Calu3 (cell line): ENCODE measurements at regions of chr2 and their contacts with region 1.

Region 1: GRCh38 chr2:158745044-158745865 is 49.9 kb upstream of the DAPL1 start:
- DNase-seq: peak; percentile 51
- H3K4me3 Mint-ChIP-seq: no peak overlapping the region
- H3K27ac Mint-ChIP-seq: no peak overlapping the region
- H3K4me1 Mint-ChIP-seq: peaks cover 15% of the 10 kb centered on the region
- H3K27me3 Mint-ChIP-seq: peaks cover 59% of the 10 kb centered on the region
- CTCF ChIP-seq: peak; percentile 53

Region 2: GRCh38 chr2:158024288-158024898 is 720.9 kb before region 1 on chr2:
- CTCF ChIA-PET with region 1: interaction called, 23 read pairs
- intact Hi-C with region 1: no loop called
- DNase-seq: peak; percentile 64
- H3K4me3 Mint-ChIP-seq: no peak overlapping the region
- H3K27ac Mint-ChIP-seq: no peak overlapping the region
- H3K4me1 Mint-ChIP-seq: no peaks in the 10 kb centered on the region
- H3K27me3 Mint-ChIP-seq: no peaks in the 10 kb centered on the region
- CTCF ChIP-seq: peak; percentile 64

Region 3: GRCh38 chr2:158113741-158114295 is 631.4 kb before region 1 on chr2:
- CTCF ChIA-PET with region 1: no interaction called
- intact Hi-C with region 1: no loop called
- DNase-seq: no peak
- H3K4me3 Mint-ChIP-seq: no peak overlapping the region
- H3K27ac Mint-ChIP-seq: no peak overlapping the region
- H3K4me1 Mint-ChIP-seq: no peaks in the 10 kb centered on the region
- H3K27me3 Mint-ChIP-seq: no peaks in the 10 kb centered on the region
- CTCF ChIP-seq: no peak

Region 4: DNA sequence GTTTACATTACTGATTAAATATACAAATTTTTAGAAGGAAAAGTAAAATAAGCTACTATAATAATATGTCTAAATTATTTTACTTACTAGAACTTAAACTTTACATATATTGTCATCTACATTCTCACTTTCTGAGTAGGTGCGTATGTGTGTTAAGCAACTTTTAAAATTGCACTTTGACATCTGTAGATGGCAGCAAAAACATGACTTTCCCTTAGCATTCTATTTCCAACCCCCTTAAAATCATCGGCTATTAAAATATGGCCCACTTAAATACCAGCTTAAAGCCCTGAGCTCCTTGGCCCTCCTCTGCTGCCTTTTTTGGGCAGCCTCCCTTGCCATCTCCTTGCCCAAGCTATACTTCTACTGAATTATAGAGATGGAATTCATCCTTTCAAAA is 565.6 kb before region 1 on chr2:
- CTCF ChIA-PET with region 1: no interaction called
- intact Hi-C with region 1: loop called (anchors 2 kb)
- DNase-seq: no peak
- H3K4me3 Mint-ChIP-seq: no peak overlapping the region
- H3K27ac Mint-ChIP-seq: no peak overlapping the region
- H3K4me1 Mint-ChIP-seq: peaks cover 28% of the 10 kb centered on the region
- H3K27me3 Mint-ChIP-seq: no peaks in the 10 kb centered on the region
- CTCF ChIP-seq: peak; percentile 42

Region 5: DNA sequence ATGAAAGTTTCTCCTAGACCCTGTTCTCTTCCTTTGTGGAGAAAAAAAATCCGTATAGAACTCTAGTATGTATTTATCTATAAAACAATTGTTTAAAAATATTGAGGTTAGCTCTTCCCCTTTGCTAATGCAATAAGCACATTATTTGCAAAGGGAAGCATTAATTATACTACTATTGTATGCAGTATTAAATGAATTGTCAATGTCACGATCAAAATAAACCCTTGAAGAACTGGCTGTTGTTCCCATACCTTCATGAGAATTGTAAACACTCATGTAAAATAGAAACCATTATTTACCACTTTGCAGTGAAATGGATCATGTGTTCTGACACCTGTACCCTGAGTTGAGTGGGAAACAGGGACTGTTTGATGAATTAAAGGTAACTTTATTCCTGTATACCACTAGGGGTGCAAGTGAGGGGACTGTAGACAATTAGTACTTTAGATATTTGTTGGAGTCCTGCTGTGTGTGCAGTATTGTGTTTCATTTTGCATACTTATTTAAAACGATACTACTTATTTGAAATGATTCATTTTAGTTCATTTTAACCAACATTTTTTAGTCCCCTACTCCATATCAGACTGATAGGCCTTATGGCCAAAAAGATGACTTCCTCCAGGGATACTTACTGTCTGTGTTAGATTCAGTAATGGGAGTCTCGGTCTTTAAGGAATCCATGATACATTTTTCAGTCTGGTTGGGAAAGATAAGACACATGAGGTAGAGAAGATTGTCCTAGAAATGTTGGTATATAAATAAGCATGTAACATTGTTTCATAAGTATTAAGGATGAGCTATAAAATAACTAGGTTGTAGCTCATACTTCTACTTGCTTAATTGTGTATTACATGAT is 280.6 kb before region 1 on chr2:
- CTCF ChIA-PET with region 1: no interaction called
- intact Hi-C with region 1: loop called (anchors 5 kb)
- DNase-seq: no peak
- H3K4me3 Mint-ChIP-seq: no peak overlapping the region
- H3K27ac Mint-ChIP-seq: no peak overlapping the region
- H3K4me1 Mint-ChIP-seq: peaks cover 44% of the 10 kb centered on the region
- H3K27me3 Mint-ChIP-seq: no peaks in the 10 kb centered on the region
- CTCF ChIP-seq: peak; percentile 56

Region 6: DNA sequence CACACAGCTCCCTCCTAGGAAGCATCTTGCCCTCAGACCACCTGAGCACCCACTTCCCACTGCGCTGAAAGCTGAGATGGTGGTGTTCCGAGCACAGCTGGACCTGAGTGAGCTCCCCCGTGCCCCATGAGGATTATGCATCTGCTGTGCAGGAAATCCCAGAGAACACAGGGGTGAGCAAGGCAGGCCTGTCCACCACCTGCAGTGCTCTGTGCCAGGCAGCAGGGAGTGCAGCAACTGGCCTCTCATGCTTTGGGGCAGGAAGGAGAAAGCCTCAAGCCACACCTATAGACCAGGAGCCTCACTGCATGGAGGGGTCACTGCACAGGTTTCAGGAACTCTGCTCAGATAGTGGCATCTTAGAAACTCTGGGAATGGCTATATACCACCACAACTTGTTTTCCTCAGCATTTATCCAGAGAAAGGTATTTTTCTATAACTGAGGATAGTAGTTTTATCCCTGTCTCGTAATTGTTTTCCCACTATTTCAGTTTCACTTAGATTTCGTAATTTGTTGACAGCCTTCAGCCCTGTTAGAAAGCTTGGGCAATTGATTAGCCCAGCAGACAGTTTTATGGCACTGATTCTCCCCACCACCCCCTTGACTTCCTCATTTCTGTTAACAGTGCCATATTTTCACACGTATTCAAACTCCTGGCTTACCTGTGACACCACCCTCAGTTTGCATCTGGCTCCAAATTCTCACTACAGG is 94.5 kb before region 1 on chr2:
- CTCF ChIA-PET with region 1: interaction called, 3 read pairs
- intact Hi-C with region 1: loop called (anchors 10 kb)
- DNase-seq: no peak
- H3K4me3 Mint-ChIP-seq: no peak overlapping the region
- H3K27ac Mint-ChIP-seq: no peak overlapping the region
- H3K4me1 Mint-ChIP-seq: no peaks in the 10 kb centered on the region
- H3K27me3 Mint-ChIP-seq: no peaks in the 10 kb centered on the region
- CTCF ChIP-seq: no peak

Region 7: GRCh38 chr2:158723917-158724690 is 21.2 kb before region 1 on chr2:
- CTCF ChIA-PET with region 1: interaction called, 17 read pairs
- intact Hi-C with region 1: no loop called
- DNase-seq: peak; percentile 69
- H3K4me3 Mint-ChIP-seq: peak overlapping the region; percentile 40
- H3K27ac Mint-ChIP-seq: peak overlapping the region; percentile 71
- H3K4me1 Mint-ChIP-seq: peaks cover 19% of the 10 kb centered on the region
- H3K27me3 Mint-ChIP-seq: no peaks in the 10 kb centered on the region
- CTCF ChIP-seq: peak; percentile 57